Activated CD4-positive, alpha-beta memory T cell treated with anti-CD3 and anti-CD28 coated beads, Interleukin-2, amount 10 ng/mL, durations not matched to agents 7 days and 5 days (primary cell): ENCODE measurements at regions of chr4 and their contacts with region 1.

Region 1: GRCh38 chr4:8198906-8199593 is at the start of gene SH3TC1:
- DNase-seq: peak; percentile 77
- H3K4me3 Mint-ChIP-seq: peak within 1 kb of the TSS; percentile 85
- H3K27ac Mint-ChIP-seq: peak within 1 kb of the TSS; percentile 78
- H3K4me1 Mint-ChIP-seq: peaks cover 37% of the 10 kb centered on the region
- H3K27me3 Mint-ChIP-seq: no peaks in the 10 kb centered on the region
- total RNA-seq, gene SH3TC1: 16.8 to 19.5 TPM

Region 2: GRCh38 chr4:8090312-8090711 is 108.7 kb before region 1 on chr4:
- CTCF ChIA-PET with region 1: no interaction called
- POLR2A ChIA-PET with region 1: no interaction called
- DNase-seq: no peak
- H3K4me3 Mint-ChIP-seq: no peak overlapping the region
- H3K27ac Mint-ChIP-seq: no peak overlapping the region
- H3K4me1 Mint-ChIP-seq: no peaks in the 10 kb centered on the region
- H3K27me3 Mint-ChIP-seq: no peaks in the 10 kb centered on the region

Region 3: DNA sequence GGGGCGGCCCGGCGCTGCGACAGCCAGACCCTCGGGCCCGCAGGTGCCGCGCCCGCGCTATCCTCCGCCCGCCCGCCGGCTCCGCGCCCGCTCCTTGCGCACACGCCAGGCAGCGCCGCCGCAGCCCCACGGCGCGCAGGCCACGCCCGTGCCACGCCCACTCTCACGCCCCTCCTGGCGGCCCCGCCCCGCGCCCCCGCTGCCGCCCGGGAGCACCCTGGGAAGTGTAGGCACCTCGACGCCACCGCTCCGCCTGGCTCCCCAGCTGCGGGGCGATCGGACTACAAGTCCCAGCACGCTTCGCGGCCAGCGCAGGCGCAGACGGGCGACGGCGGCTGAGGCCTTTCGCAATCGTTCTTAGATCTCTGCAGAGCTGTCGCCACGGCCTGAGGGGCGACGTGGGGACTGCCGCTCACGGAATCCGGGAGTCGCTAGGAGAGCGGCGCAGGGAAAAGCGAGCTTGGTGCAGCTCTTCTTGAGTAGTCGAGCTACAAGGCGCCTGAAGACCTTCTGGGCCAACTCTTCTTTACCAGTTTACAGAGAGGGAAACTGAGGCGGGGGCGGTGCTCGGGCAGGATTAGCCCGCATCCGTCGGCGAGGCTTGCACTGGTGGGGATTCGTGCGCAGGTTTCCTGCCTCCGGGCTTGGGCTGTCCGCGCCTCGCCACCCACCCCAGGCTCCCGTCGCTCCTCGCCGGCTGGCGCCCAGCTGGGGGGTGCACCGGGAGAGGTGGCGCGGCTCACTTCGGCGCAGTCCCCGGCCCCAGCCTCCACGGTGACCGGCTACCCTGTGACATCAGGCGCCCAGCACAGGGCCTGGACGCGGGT is 40.1 kb before region 1 on chr4 and contains the start of gene ABLIM2:
- CTCF ChIA-PET with region 1: no interaction called
- POLR2A ChIA-PET with region 1: interaction called, 12 read pairs
- DNase-seq: peak; percentile 99
- H3K4me3 Mint-ChIP-seq: peak within 1 kb of the TSS; percentile 90
- H3K27ac Mint-ChIP-seq: peak within 1 kb of the TSS; percentile 10
- H3K4me1 Mint-ChIP-seq: peaks cover 11% of the 10 kb centered on the region
- H3K27me3 Mint-ChIP-seq: peaks cover 18% of the 10 kb centered on the region
- total RNA-seq, gene ABLIM2: 0.13 TPM in 1 of 2 experiments, not detected in the other

Region 4: GRCh38 chr4:8176547-8177399 is 22.3 kb before region 1 on chr4:
- CTCF ChIA-PET with region 1: interaction called, 14 read pairs
- POLR2A ChIA-PET with region 1: interaction called, 5 read pairs
- DNase-seq: peak; percentile 48
- H3K4me3 Mint-ChIP-seq: no peak overlapping the region
- H3K27ac Mint-ChIP-seq: no peak overlapping the region
- H3K4me1 Mint-ChIP-seq: peaks cover 2% of the 10 kb centered on the region
- H3K27me3 Mint-ChIP-seq: peaks cover 2% of the 10 kb centered on the region